ENCODE measurements at regions of chr12 and their contacts with region 1.

Region 1: GRCh38 chr12:26274441-26275312 is 79.3 kb downstream of the SSPN start:
- DNase-seq: peak; percentile 77
- H3K4me3 Mint-ChIP-seq: no peak overlapping the region
- H3K27ac Mint-ChIP-seq: no peak overlapping the region
- H3K4me1 Mint-ChIP-seq: peaks cover 16% of the 10 kb centered on the region
- H3K27me3 Mint-ChIP-seq: peaks cover 3% of the 10 kb centered on the region

Region 2: GRCh38 chr12:25734529-25735180 is 540.0 kb before region 1 on chr12:
- CTCF ChIA-PET with region 1: no interaction called
- POLR2A ChIA-PET with region 1: no interaction called
- intact Hi-C with region 1: no loop called
- DNase-seq: no peak
- H3K4me3 Mint-ChIP-seq: no peak overlapping the region
- H3K27ac Mint-ChIP-seq: no peak overlapping the region
- H3K4me1 Mint-ChIP-seq: no peaks in the 10 kb centered on the region
- H3K27me3 Mint-ChIP-seq: peaks cover 1% of the 10 kb centered on the region

Region 3: DNA sequence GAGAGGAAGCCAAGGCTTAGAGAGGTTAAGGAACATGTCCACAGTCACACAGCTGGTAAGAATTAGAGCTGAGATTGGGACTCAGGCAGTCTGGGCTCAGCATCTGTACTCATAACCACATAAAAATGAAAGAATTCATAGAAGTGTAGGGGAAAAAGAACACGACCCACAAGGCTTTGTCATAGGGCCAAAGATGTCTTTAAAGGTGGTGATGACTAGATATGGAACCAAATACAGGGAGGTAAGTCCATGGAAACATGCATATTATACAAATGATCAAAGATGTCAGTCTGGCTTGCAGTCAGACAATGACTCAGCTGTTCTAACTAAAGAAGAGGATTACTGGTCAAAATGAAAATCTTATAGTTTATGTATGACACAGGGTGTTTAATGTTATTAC is 86.5 kb before region 1 on chr12:
- CTCF ChIA-PET with region 1: no interaction called
- POLR2A ChIA-PET with region 1: no interaction called
- intact Hi-C with region 1: loop called (anchors 5 kb)
- DNase-seq: no peak
- H3K4me3 Mint-ChIP-seq: no peak overlapping the region
- H3K27ac Mint-ChIP-seq: no peak overlapping the region
- H3K4me1 Mint-ChIP-seq: no peaks in the 10 kb centered on the region
- H3K27me3 Mint-ChIP-seq: peaks cover 27% of the 10 kb centered on the region

Region 4: GRCh38 chr12:26318661-26319068 is 44.0 kb after region 1 on chr12:
- CTCF ChIA-PET with region 1: no interaction called
- POLR2A ChIA-PET with region 1: no interaction called
- intact Hi-C with region 1: loop called (anchors 1 kb)
- DNase-seq: peak; percentile 20
- H3K4me3 Mint-ChIP-seq: no peak overlapping the region
- H3K27ac Mint-ChIP-seq: no peak overlapping the region
- H3K4me1 Mint-ChIP-seq: peaks cover 8% of the 10 kb centered on the region
- H3K27me3 Mint-ChIP-seq: peaks cover 13% of the 10 kb centered on the region

Region 5: DNA sequence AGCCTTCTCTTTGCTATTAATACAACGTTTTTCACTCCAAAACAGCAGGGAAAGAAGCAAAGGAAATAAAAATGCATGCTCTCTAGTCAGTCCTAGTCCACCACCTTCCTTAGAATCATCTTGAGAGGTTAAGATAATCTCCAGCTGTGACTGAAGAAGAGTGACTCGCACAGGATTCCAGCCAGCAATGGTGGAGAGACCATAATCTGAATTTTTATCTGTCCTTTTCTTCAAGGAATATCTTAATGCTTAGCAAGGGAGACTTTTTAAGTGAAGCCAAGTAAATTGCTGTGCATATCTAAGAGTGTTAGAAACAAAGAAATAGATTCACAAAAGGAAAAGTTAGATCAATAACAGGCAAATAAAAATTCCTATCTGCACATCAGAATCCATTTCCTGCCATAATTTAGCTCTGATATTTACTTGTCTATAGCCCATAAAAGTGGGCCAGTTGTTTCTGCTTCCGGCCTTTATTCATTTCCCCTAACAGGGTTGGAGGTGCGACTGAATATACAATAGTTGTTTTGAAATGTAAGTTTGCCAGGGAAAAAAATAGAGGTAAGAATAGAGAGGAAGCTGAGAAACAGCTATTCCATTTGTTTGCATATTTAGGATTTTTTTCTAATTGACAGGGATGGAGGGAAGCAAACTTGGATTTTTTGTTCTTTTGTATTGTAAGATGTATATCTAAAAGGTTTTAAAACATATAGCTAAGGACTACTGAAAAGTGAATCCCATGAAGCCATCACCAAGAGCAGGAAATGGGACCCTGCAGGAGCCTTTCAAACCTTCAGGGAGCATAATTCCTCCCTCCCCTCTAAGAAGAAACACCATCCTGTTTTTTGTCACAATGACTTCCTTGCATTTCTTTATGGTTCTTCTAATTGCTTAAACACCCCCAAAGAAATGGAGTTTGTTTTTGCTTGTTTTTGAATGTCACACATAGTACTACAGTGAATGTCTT is 404.3 kb after region 1 on chr12:
- CTCF ChIA-PET with region 1: no interaction called
- POLR2A ChIA-PET with region 1: no interaction called
- intact Hi-C with region 1: no loop called
- DNase-seq: no peak
- H3K4me3 Mint-ChIP-seq: no peak overlapping the region
- H3K27ac Mint-ChIP-seq: no peak overlapping the region
- H3K4me1 Mint-ChIP-seq: no peaks in the 10 kb centered on the region
- H3K27me3 Mint-ChIP-seq: no peaks in the 10 kb centered on the region